Left ventricle myocardium inferior (tissue), 1 donor: ENCODE measurements at regions of chr1 and their contacts with region 1.

Region 1: DNA sequence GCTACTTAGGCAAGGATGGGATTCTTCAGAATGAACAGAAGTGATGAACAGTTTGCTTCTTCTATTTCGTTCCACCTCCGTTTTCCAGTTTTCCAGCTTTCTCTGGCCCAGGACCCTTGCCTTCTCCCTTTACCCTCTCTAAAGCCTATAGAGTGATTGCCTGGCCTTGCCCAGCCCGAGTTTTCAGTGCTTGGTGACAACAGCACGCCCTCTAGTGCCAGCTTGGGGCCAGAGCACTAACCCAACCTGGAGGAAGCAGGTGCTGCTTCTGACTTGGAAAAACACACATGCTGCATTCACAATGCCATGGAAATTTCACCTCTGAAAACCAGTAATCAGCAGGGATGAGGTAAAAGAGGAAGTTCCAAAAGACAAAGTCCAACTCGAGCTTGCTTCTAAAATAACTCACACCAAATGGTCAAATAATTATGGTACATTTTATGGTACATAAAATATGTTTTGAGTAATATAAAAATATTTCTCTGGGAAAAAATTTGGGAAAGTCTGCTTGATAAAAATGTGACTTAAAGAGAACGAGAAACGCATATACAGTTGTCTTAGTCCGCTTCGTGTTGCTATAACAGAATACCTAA is 26.1 kb downstream of the UBE2T start:
- DNase-seq: peak; percentile 67
- H3K4me3 ChIP-seq: no peak overlapping the region
- H3K27ac ChIP-seq: no peak overlapping the region
- H3K4me1 ChIP-seq: peaks cover 6% of the 10 kb centered on the region
- H3K27me3 ChIP-seq: peaks cover 18% of the 10 kb centered on the region
- CTCF ChIP-seq: peak; percentile 89

Region 2: GRCh38 chr1:202184750-202185460 is 130.8 kb before region 1 on chr1:
- intact Hi-C with region 1: loop called (anchors 10 kb)
- DNase-seq: peak; percentile 76
- H3K4me3 ChIP-seq: no peak overlapping the region
- H3K27ac ChIP-seq: no peak overlapping the region
- H3K4me1 ChIP-seq: no peaks in the 10 kb centered on the region
- H3K27me3 ChIP-seq: peaks cover 54% of the 10 kb centered on the region
- CTCF ChIP-seq: peak; percentile 86